ENCODE measurements at regions of chr3 and their contacts with region 1.

Region 1: DNA sequence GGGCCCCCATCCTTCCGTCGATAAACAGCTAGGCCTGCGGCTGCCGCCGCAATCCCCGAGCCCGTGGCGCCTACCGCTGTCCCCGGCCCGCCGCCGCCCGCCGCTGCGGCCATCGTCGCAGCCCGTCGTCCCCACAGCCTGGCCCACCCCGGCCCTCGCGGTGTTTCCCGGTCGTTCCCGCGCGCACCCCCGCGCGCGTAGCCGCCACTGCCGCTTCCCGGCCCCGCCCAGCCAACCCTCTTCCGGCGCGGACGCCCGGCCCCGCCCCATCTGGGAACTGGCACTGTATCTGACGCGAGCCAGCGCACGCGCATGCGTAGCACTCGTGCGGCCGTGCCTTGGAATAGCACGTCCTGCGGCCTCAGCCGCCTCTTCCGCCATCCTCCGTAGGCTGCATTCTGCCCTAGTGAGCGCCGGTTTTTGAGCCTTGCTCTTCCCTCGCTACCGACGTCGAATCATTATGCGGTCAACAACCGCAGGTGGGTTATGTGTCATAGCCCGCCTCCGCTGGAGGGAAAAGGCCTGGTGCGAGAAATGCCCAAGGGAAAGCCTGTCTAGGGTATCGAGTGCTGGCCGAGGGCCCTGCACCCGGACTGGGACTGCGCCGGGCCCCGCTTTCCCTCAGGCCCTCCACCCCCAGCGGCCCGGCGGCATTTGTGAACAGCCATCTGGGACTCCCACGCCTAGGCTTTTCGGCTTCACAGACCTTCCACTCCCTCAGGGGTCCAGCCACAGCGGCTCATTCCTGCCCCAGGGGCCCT is at the start of gene SMARCC1:
- DNase-seq: peak; percentile 94 to 97
- ATAC-seq: peak; percentile 94
- H3K4me3 ChIP-seq: peak within 1 kb of the TSS; percentile 73 to 95 (median 91)
- H3K27ac ChIP-seq: peak within 1 kb of the TSS; percentile 98 to 100 (median 98)
- H3K4me1 ChIP-seq: peaks cover 29 to 32% of the 10 kb centered on the region in 2 donors
- H3K27me3 ChIP-seq: no peaks in the 10 kb centered on the region
- CTCF ChIP-seq: no peak
- POLR2A ChIP-seq: peak; percentile 88 to 94
- total RNA-seq, gene SMARCC1: 24.5 to 32.1 (median 28.1) TPM

Region 2: DNA sequence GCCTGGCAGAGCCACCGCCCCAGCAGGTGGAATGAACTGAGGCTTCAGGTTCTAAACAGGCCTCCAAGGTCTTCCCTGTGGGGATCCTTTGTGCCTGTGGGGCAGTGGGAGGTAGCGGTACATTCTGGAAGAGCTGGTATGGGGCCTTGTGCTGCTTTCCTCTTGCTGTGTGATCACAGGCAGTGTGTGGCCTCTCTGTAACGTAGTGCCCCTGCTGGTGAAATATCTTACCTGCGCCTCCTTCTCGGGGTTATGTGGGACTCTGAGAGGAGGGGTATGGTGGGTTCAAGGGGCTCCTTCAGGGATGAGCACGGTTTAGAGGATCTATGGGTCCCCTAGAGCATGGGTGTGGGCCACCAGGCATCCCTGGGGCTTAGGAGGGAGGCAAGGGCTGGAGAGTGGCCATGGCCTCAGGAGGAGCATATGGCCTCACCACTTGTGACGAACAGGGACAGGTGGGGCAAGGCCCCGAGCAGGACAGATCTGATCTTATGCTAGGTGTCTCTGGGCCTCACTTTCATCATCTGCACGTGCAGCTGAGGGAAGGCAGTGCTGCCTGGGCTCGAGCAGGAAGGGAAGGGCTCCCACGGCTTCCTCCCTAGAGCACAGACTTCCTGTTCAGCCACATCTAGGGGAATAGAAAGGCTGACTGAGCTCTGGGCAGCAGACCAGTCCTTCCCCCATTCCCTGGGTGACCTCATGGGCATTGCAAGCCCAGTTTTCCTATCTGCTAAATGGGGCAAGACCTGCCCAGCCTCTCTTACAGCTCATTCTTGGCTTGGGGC is 1086.5 kb before region 1 on chr3:
- in situ Hi-C with region 1: no loop called
- intact Hi-C with region 1: loop called (anchors 10 kb)
- DNase-seq: peak; percentile 72 to 83
- ATAC-seq: peak; percentile 29 to 33
- H3K4me3 ChIP-seq: no peak overlapping the region
- H3K27ac ChIP-seq: peak overlapping the region; percentile 93 to 97 (median 96)
- H3K4me1 ChIP-seq: peaks cover 62% of the 10 kb centered on the region in 2 donors
- H3K27me3 ChIP-seq: no peaks in the 10 kb centered on the region
- CTCF ChIP-seq: peak in 3 of 5 experiments; percentile 33 to 55 (median 38)
- POLR2A ChIP-seq: no peak

Region 3: DNA sequence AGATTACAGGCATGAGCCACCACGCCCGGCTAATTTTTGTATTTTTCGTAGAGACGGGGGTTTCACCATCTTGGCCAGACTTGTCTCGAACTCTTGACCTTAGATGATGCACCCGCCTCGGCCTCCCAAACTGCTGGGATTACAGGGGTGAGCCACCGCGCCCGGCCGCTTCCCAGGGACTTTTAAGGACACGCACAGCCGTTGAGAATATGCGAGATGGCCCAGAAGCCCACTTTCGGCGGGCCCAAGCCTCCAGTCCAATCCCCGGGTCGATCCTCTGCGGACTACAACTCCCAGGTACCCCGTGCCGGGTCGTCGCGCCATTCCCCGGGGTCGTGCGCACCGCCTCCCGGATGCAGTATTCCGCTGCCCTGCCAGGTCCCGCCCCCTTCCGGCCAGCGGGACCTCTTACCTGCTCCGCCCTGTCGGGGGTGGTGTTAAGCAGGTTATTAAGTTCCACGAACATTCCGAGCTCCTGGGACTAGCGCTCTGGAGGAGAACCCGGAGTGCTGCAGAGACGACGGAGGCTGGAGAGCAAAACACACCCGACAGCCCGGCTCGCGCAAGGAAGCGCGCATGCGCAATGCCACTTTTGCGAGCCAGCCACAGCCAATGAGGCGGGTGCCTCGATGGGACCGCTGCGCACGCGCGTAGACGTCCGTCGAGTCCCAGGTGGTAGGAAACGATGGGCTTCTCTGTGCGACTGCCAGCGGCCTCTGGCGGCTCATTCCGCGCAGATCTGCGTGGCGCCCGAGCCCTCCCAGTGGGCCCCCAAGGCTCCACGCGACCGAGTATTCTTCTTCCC is 268.5 kb before region 1 on chr3 and contains the start of gene ELP6:
- in situ Hi-C with region 1: loop called in 1 of 4 experiments (anchors 5 kb)
- intact Hi-C with region 1: no loop called
- DNase-seq: peak; percentile 94 to 96
- ATAC-seq: peak; percentile 97
- H3K4me3 ChIP-seq: peak within 1 kb of the TSS; percentile 59 to 93 (median 78)
- H3K27ac ChIP-seq: peak within 1 kb of the TSS; percentile 84 to 98 (median 94)
- H3K4me1 ChIP-seq: peaks cover 0 to 5% of the 10 kb centered on the region in 2 donors
- H3K27me3 ChIP-seq: no peaks in the 10 kb centered on the region
- CTCF ChIP-seq: peak in 3 of 5 experiments; percentile 32 to 43 (median 34)
- POLR2A ChIP-seq: peak; percentile 47 to 63
- total RNA-seq, gene ELP6: 16.9 to 31.1 (median 26.6) TPM

Region 4: GRCh38 chr3:47522082-47522987 is 259.5 kb before region 1 on chr3:
- in situ Hi-C with region 1: loop called in 1 of 4 experiments (anchors 5 kb)
- intact Hi-C with region 1: no loop called
- DNase-seq: peak; percentile 72 to 83
- ATAC-seq: peak; percentile 98 to 99
- H3K4me3 ChIP-seq: no peak overlapping the region
- H3K27ac ChIP-seq: no peak overlapping the region
- H3K4me1 ChIP-seq: peaks cover 4% of the 10 kb centered on the region in 2 donors
- H3K27me3 ChIP-seq: no peaks in the 10 kb centered on the region
- CTCF ChIP-seq: peak; percentile 89 to 95 (median 94)
- POLR2A ChIP-seq: no peak

Region 5: GRCh38 chr3:47612178-47612577 is 169.7 kb before region 1 on chr3:
- in situ Hi-C with region 1: no loop called
- intact Hi-C with region 1: loop called (anchors 5 kb)
- DNase-seq: no peak
- ATAC-seq: peak in 1 of 2 donors; percentile 59
- H3K4me3 ChIP-seq: no peak overlapping the region
- H3K27ac ChIP-seq: peak overlapping the region in 2 of 4 donors; percentile 9 to 48
- H3K4me1 ChIP-seq: peaks cover 32 to 45% of the 10 kb centered on the region in 2 donors
- H3K27me3 ChIP-seq: no peaks in the 10 kb centered on the region
- CTCF ChIP-seq: no peak
- POLR2A ChIP-seq: no peak

Region 6: GRCh38 chr3:47664519-47664918 is 117.3 kb before region 1 on chr3:
- in situ Hi-C with region 1: no loop called
- intact Hi-C with region 1: loop called (anchors 5 kb)
- DNase-seq: no peak
- ATAC-seq: no peak
- H3K4me3 ChIP-seq: no peak overlapping the region
- H3K27ac ChIP-seq: no peak overlapping the region
- H3K4me1 ChIP-seq: peaks cover 0 to 11% of the 10 kb centered on the region in 2 donors
- H3K27me3 ChIP-seq: no peaks in the 10 kb centered on the region
- CTCF ChIP-seq: no peak
- POLR2A ChIP-seq: no peak

Region 7: GRCh38 chr3:47802734-47803477 is 21.0 kb after region 1 on chr3 and contains the start of gene DHX30:
- in situ Hi-C with region 1: no loop called
- intact Hi-C with region 1: loop called (anchors 1 kb)
- DNase-seq: peak; percentile 77 to 81
- ATAC-seq: peak; percentile 90 to 93
- H3K4me3 ChIP-seq: peak within 1 kb of the TSS; percentile 79 to 94 (median 86)
- H3K27ac ChIP-seq: peak within 1 kb of the TSS; percentile 86 to 96 (median 94)
- H3K4me1 ChIP-seq: peaks cover 7 to 14% of the 10 kb centered on the region in 2 donors
- H3K27me3 ChIP-seq: no peaks in the 10 kb centered on the region
- CTCF ChIP-seq: no peak
- POLR2A ChIP-seq: peak; percentile 69 to 89
- total RNA-seq, gene DHX30: 45.7 to 91.1 (median 67.9) TPM

Measured in gastrocnemius medialis (tissue), 4 donors.